AG04449 (cell line): ENCODE measurements at regions of chr6 and their contacts with region 1.

Region 1: DNA sequence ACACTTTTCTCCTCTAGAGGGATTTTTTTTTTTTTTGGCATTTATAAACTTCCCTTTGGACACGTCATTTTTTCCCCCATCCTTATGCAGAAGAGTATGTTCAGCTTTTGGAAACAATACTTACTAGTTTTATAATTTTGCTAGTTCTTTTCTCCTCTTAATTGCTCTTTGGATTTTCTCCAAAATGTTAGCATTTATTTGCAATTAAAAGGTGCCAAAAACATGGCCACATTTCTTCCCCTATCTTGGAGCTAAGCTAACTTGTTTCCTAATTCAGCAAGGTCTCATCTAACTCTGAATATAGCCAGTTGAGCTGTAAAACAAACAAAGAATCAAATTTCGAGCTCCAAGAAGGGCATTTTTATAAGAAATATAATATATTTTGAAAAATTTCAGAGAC is 39.2 kb upstream of the RNF182 start:
- DNase-seq: no peak
- H3K4me3 ChIP-seq: no peak overlapping the region
- CTCF ChIP-seq: no peak

Region 2: GRCh38 chr6:13873285-13874190 is 12.1 kb before region 1 on chr6:
- CTCF ChIA-PET with region 1: interaction called, 12 read pairs
- POLR2A ChIA-PET with region 1: no interaction called
- DNase-seq: no peak
- H3K4me3 ChIP-seq: peak overlapping the region; percentile 50
- CTCF ChIP-seq: peak; percentile 77

Region 3: DNA sequence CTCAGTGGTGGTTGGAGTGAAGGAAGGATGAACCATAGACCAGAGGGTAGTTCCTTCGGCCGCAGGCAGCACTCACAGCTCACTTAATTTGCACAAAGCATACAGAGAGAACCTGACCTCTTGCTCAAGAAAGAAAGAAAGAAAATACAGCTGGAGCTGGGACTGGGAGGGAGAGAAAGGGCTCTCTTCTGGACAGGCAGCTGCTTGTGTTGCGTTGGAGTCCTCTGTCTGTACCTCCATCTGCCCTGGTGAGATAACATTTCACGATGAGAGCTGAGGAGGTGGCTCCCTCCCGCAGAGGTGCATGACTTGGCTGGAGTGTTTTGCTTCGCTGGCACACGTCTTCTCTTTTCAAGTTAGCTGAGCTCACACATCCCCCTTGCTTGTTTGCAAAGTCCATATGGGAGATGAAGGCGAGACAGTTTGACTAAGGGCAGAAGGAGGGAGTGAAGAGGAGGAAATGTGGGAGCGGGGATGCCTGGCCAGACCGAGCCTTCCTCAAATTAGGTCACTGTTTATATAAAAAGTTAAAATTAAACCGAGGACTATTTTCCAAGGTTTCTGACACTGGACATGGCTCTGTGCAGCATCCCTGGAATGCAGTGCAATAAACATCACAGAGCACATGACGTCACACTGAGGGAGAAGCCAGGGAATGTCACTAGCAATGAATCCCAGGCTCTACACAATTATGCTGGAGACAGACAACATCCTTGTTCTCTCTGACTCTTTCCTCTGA is 591.4 kb after region 1 on chr6:
- CTCF ChIA-PET with region 1: no interaction called
- POLR2A ChIA-PET with region 1: no interaction called
- DNase-seq: peak; percentile 80
- H3K4me3 ChIP-seq: peak overlapping the region; percentile 40
- CTCF ChIP-seq: no peak